ENCODE measurements at regions of chr3 and their contacts with region 1.

Region 1: DNA sequence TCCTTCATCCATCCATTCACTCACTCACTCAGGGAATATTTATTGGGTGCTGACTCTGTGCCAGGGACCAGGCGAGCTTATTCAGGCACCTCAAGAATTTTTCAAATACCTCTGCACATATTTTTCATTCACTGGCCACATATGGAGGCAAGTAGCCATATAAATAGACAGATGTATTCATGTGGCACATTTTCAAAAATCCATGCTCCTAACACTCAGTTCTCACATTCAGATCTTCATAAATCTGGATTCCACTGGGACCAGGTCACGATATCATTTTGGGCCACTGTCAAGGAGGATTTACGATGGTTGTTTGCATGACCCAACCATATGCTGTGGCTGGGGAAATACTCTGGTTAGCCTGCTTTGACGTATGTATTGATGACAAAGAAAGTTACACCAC is 241.8 kb upstream of the LRTM1 start:
- DNase-seq: peak; percentile 100
- ATAC-seq: peak; percentile 60
- H3K4me3 ChIP-seq: no peak overlapping the region
- H3K27ac ChIP-seq: peak overlapping the region; percentile 98; the same call in 1 of the 2 replicates
- H3K4me1 ChIP-seq: peaks cover 35% of the 10 kb centered on the region
- H3K27me3 ChIP-seq: no peaks in the 10 kb centered on the region
- CTCF ChIP-seq: no peak
- POLR2A ChIP-seq: no peak
- RAD21 ChIP-seq: 0 out of 2 replicates have a peak, but pooled peaks have one; percentile 24

Region 2: GRCh38 chr3:54427941-54428871 is 741.4 kb before region 1 on chr3:
- CTCF ChIA-PET with region 1: no interaction called
- POLR2A ChIA-PET with region 1: no interaction called
- dilution Hi-C with region 1: no loop called
- in situ Hi-C with region 1: no loop called
- intact Hi-C with region 1: loop called (anchors 5 kb)
- DNase-seq: peak; percentile 76
- ATAC-seq: peak; percentile 90
- H3K4me3 ChIP-seq: no peak overlapping the region
- H3K27ac ChIP-seq: no peak overlapping the region
- H3K4me1 ChIP-seq: no peaks in the 10 kb centered on the region
- H3K27me3 ChIP-seq: no peaks in the 10 kb centered on the region
- CTCF ChIP-seq: peak; percentile 88
- POLR2A ChIP-seq: no peak
- RAD21 ChIP-seq: peak; percentile 83

Region 3: DNA sequence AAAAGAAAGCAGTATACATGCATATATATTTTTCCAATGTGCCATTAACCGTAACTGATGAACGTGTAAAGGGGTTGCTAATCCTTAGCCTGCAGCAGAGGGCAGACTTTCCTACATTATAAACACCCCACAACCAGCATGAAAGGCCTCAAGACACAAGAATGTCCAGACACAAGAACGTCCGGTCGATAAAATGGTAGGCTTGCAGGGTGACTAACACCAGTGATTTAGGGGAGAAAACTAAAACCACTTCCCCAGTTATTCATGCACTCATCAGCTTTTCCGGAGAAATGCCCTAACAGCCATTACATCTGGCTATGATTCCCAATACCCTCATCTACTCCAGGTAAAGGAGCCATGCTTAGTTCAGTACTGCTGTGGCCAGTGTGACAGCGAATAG is 299.2 kb before region 1 on chr3:
- CTCF ChIA-PET with region 1: no interaction called
- POLR2A ChIA-PET with region 1: no interaction called
- dilution Hi-C with region 1: no loop called
- in situ Hi-C with region 1: no loop called
- intact Hi-C with region 1: loop called (anchors 5 kb)
- DNase-seq: peak; percentile 97
- ATAC-seq: peak; percentile 98
- H3K4me3 ChIP-seq: no peak overlapping the region
- H3K27ac ChIP-seq: peak overlapping the region; percentile 70
- H3K4me1 ChIP-seq: peaks cover 3% of the 10 kb centered on the region
- H3K27me3 ChIP-seq: no peaks in the 10 kb centered on the region
- CTCF ChIP-seq: peak; percentile 88
- POLR2A ChIP-seq: peak; percentile 40; the same call in 1 of the 2 replicates
- RAD21 ChIP-seq: peak; percentile 92

Region 4: DNA sequence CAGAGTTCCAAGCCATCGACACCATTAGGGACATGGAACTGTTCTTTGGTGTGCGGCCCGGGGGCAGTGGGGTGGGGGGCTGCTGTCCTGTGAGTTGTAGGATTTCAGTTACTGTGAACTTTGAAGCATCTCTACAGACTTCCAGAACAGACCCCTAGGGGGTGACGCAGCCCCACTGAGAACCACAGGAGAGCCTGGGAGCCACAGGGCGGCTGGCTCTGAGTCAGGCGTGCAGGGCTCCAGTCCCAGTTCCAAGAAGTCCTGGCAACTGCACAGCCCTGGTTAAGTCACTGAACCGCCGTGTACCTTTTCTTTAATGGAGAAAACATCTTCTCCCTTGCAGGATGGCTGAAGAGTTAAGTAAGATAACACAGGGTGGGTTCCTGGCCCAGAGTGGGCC is 218.2 kb before region 1 on chr3:
- CTCF ChIA-PET with region 1: interaction called, 3 read pairs
- POLR2A ChIA-PET with region 1: no interaction called
- dilution Hi-C with region 1: no loop called
- in situ Hi-C with region 1: loop called (anchors 5 kb)
- intact Hi-C with region 1: loop called (anchors 1 kb)
- DNase-seq: peak; percentile 93
- ATAC-seq: peak; percentile 89
- H3K4me3 ChIP-seq: no peak overlapping the region
- H3K27ac ChIP-seq: peak overlapping the region; percentile 29
- H3K4me1 ChIP-seq: peaks cover 18% of the 10 kb centered on the region
- H3K27me3 ChIP-seq: no peaks in the 10 kb centered on the region
- CTCF ChIP-seq: peak; percentile 92
- POLR2A ChIP-seq: peak; percentile 53; the same call in 1 of the 2 replicates
- RAD21 ChIP-seq: peak; percentile 99

Region 5: GRCh38 chr3:55059027-55059629 is 110.5 kb before region 1 on chr3:
- CTCF ChIA-PET with region 1: no interaction called
- POLR2A ChIA-PET with region 1: no interaction called
- dilution Hi-C with region 1: no loop called
- in situ Hi-C with region 1: no loop called
- intact Hi-C with region 1: loop called (anchors 5 kb)
- DNase-seq: peak; percentile 55
- ATAC-seq: peak; percentile 79
- H3K4me3 ChIP-seq: no peak overlapping the region
- H3K27ac ChIP-seq: peak overlapping the region; percentile 93
- H3K4me1 ChIP-seq: peaks cover 20% of the 10 kb centered on the region
- H3K27me3 ChIP-seq: no peaks in the 10 kb centered on the region
- CTCF ChIP-seq: no peak
- POLR2A ChIP-seq: no peak
- RAD21 ChIP-seq: no peak

Region 6: GRCh38 chr3:55267206-55267930 is 97.8 kb after region 1 on chr3:
- CTCF ChIA-PET with region 1: interaction called, 3 read pairs
- POLR2A ChIA-PET with region 1: interaction called, 3 read pairs
- dilution Hi-C with region 1: no loop called
- in situ Hi-C with region 1: no loop called
- intact Hi-C with region 1: loop called (anchors 5 kb)
- DNase-seq: peak; percentile 76
- ATAC-seq: peak; percentile 60
- H3K4me3 ChIP-seq: no peak overlapping the region
- H3K27ac ChIP-seq: peak overlapping the region; percentile 100
- H3K4me1 ChIP-seq: peaks cover 24% of the 10 kb centered on the region
- H3K27me3 ChIP-seq: no peaks in the 10 kb centered on the region
- CTCF ChIP-seq: no peak
- POLR2A ChIP-seq: no peak
- RAD21 ChIP-seq: no peak